Cardiac septum (tissue), 1 donor: ENCODE measurements at regions of chr9 and their contacts with region 1.

Region 1: DNA sequence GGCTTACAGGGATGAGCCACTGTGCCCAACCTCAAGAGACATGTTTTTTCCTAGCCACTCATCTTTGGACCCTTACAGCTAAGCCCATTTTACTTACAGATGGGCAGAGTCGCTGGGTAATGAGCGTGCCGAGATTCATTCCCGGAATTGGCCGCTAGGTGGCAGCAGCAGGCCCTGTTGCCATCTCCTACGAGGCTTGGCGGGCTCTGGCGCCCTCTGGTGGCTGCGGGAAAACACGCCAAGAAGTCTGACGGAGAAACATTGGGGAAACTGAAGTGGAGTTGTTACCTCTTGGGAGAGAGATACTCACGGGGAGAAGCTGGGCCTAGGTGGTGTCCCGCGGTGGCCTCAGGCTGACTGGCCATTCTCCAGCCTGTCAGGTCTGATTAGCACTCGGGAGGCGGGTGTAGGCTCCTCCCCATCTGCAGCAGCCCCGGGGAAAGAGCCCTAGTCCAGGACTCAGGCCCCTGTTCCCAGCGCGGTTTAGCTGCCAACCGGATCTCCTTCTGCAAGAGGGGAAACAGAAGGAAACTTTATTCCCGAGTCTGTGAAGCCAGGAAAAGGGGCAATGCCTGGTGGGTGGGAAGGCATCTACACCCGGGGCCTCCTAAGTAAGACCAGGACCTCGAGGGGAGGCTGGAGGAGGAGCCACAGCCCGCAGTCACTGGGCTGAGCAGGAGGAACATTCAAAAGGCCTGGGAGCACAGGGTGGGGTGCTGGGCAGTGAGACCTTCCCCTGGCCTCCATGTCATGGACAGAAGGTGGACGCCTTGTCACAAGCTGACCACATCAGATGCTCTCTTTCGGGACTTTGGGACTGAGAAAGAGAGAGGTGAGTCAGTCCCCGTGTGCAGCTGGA is 9.7 kb downstream of the PTGES2 start:
- DNase-seq: peak; percentile 97

Region 2: DNA sequence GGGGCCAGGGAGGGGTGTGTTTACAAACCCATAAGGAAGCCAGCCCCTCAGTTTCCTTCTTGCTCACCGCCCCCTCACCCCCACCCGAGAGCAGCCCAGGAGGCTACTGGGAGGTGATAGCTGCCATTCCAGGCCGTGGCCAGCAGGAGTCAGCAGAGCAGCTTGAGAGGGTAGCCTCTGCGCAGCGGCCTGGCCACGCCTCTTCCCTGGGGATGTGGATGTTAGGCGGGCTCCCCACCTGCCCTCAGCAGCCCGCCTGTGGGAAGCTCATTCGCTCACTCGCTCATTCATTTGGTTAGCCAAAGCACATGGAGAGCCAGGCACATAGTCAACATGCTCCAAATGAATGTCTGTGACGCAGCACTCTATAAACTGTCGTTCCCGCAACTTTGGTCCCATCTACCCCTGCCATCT is 174.1 kb before region 1 on chr9:
- intact Hi-C with region 1: loop called (anchors 1 kb)
- DNase-seq: peak; percentile 93

Region 3: DNA sequence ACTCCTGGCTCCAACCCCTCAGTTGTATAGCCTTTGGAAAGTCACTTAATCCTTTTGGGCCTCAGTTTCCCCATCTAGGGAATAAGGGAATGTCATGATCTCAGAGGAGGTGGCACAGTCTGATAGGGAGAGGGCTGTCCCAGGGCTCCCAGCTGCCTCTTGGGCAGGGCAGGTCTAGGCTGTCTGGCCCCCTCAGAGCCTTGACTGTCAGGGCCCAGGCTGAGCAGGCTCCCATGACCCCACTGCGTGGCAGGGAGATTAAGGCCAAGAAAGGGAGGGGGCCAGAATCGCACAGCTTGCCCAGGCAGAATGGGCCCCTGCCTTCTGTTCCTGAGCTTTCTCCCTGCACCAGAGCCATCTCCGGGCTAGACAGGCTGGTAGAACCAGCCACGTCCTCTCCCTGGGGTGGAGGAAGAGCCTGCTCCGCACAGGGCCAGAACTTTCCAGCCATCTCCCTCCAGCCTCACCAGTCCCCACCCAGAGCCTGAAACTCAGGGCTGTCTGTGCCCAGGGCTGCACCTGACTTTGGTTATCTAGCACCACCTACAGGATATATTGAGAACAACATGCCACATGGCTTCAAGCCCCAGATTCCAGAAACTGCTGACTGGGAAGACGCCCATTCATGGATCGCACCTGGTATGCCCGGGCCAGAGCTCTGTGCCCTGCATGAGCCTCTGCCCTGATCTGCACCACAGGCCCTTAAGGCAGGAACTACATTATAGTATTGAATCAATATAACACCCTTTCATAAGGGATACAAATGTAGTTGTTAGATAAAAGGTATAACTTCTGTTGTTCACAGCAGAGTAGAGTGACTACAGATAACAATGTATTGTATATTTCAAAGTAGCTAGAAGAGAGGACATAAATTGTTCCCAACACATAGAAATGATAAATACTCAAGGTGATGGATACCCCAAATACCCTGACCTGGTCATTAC is 82.7 kb before region 1 on chr9:
- intact Hi-C with region 1: loop called (anchors 2 kb)
- DNase-seq: peak; percentile 80

Region 4: GRCh38 chr9:128067876-128068613 is 49.8 kb before region 1 on chr9 and contains the start of gene SLC25A25:
- intact Hi-C with region 1: loop called (anchors 5 kb)
- DNase-seq: peak; percentile 100
- total RNA-seq, gene SLC25A25: 5.6 TPM

Region 5: DNA sequence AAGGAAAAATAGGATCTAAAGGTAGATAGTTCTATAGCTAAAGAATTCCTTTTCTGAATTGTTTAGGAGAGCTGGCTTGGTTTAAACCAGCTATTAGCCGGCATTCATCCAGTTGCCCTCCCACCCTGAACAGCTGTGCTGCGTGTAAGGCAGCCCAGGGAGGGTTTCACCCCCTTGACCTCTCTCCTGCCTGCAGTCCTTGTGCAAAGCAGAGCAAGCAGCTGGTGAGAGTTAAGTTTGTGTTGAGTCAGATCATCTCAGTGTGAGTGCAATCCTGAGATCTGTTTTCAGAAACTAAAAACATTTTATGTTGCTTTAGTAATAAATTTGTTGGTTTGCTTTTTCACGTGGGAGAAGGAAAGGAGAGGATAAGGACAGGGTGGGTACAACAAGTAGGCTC is 36.8 kb before region 1 on chr9:
- intact Hi-C with region 1: no loop called
- DNase-seq: no peak

Region 6: GRCh38 chr9:128159784-128160602 is 42.2 kb after region 1 on chr9 and contains the start of gene BBLN:
- intact Hi-C with region 1: no loop called
- DNase-seq: peak; percentile 99
- total RNA-seq, gene BBLN: 65.7 TPM

Region 7: GRCh38 chr9:128191406-128192046 is 73.7 kb after region 1 on chr9 and contains the start of gene CIZ1:
- intact Hi-C with region 1: no loop called
- DNase-seq: peak; percentile 91
- total RNA-seq, gene CIZ1: 86.1 TPM

Region 8: GRCh38 chr9:128262687-128263086 is 144.8 kb after region 1 on chr9:
- intact Hi-C with region 1: no loop called
- DNase-seq: no peak